SK-N-SH (cell line): ENCODE measurements at regions of chr17 and their contacts with region 1.

Region 1: DNA sequence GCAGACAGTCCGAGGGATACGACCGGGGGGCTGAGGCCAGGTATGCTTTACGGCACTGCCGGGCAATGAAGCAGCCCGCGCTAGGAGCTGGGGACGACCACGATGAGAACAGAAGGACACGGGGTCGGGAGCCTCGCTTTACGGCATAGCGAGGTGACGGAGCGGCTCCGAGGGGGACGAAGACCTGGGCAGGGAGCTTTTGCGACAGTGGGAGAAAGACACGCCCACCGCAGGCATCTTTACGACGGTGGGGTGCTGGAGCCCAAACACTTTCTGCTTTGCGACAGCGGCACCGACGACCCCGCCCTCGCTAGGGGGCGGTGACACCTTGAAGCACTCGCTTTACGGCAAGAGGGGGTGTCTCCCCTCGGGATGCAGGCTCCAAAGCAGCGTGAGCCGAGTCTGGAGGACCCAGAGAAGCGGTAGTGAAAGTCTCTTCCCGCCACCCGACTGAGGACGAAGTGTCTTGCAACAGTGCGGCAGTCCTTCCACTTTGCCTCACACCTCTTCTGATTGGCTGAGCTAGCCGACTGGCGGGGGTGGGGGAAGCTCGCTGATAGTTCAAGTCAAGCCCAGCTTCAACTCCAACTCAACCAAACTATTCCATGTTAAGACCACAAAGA is 350 bp upstream of the NEURL4 start:
- DNase-seq: peak; percentile 97
- H3K4me3 ChIP-seq: peak overlapping the region; percentile 69 to 93
- H3K27ac ChIP-seq: peak overlapping the region; percentile 79 to 92
- H3K4me1 ChIP-seq: peaks cover 3 to 13% of the 10 kb centered on the region in 2 experiments; a peak in 2 of 4 replicates
- H3K27me3 ChIP-seq: no peaks in the 10 kb centered on the region; the same call in 1 of the 2 replicates
- CTCF ChIP-seq: 0 out of 2 replicates have a peak, but pooled peaks have one; percentile 9
- EP300 ChIP-seq: no peak
- RAD21 ChIP-seq: no peak

Region 2: GRCh38 chr17:7289256-7290032 is 40.0 kb before region 1 on chr17:
- CTCF ChIA-PET with region 1: no interaction called
- POLR2A ChIA-PET with region 1: no interaction called
- DNase-seq: peak; percentile 29
- H3K4me3 ChIP-seq: no peak overlapping the region
- H3K27ac ChIP-seq: no peak overlapping the region
- H3K4me1 ChIP-seq: peaks cover 0 to 3% of the 10 kb centered on the region in 2 experiments; a peak in 1 of 4 replicates
- H3K27me3 ChIP-seq: peaks cover 30% of the 10 kb centered on the region; the same call in 1 of the 2 replicates
- CTCF ChIP-seq: no peak
- EP300 ChIP-seq: no peak
- RAD21 ChIP-seq: no peak

Region 3: GRCh38 chr17:7314719-7315569 is 14.5 kb before region 1 on chr17 and contains the start of gene GPS2:
- CTCF ChIA-PET with region 1: interaction called, 12 read pairs
- POLR2A ChIA-PET with region 1: interaction called, 11 read pairs
- DNase-seq: peak; percentile 97
- H3K4me3 ChIP-seq: peak within 1 kb of the TSS; percentile 88 to 94
- H3K27ac ChIP-seq: peak within 1 kb of the TSS; percentile 76 to 90
- H3K4me1 ChIP-seq: peaks cover 14 to 39% of the 10 kb centered on the region in 2 experiments
- H3K27me3 ChIP-seq: no peaks in the 10 kb centered on the region
- CTCF ChIP-seq: no peak
- EP300 ChIP-seq: no peak
- RAD21 ChIP-seq: no peak
- polyA plus RNA-seq, gene GPS2: 67.0 and 102 TPM in 2 replicates

Region 4: DNA sequence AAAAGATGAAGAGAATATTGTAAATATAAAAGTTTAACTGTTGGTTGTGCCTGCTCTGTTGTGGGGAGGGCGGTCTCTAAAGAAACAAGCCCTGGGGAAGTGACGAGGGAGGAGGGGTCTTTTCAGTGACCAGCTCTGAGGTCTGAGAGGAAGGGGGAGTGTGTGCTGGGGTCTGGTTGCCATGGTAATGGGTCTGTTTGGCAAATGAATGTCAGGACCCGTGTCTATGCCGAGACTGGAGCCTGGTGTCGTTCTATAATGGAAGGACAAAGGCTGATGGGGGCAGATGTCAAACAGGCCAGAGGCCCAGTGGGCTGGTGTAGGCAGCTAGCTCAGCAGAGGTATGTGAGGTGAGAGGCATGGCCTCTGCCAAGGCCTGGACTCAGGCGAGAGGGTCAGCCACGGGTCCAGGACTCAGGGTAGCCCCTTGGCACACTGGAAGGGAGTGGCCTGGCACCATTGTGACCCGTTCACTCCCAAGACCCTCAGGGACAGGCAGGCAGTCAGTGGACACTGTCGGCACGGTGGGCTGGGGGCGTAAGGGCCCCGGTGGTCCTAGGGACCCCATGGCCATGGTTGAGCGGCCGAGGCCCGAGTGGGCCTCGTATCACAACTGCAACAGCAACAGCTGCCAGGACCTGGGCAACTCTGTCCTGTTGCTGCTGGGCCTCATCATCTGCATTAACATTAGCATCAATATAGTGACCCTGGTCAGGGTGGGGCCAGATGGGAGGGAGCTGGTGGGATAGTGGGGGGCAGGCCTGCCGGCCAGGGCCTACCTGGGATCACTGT is 90.5 kb after region 1 on chr17 and contains the start of gene SPEM1:
- CTCF ChIA-PET with region 1: no interaction called
- POLR2A ChIA-PET with region 1: no interaction called
- DNase-seq: peak; percentile 71
- H3K4me3 ChIP-seq: no peak within 1 kb of the TSS
- H3K27ac ChIP-seq: no peak within 1 kb of the TSS
- H3K4me1 ChIP-seq: no peaks in the 10 kb centered on the region; a peak in 1 of 4 replicates
- H3K27me3 ChIP-seq: no peaks in the 10 kb centered on the region
- CTCF ChIP-seq: no peak
- EP300 ChIP-seq: no peak
- RAD21 ChIP-seq: no peak
- polyA plus RNA-seq, gene SPEM1: not detected in 2 replicates